Right cardiac atrium (tissue), 5 donors: ENCODE measurements at regions of chr14 and their contacts with region 1.

Region 1: DNA sequence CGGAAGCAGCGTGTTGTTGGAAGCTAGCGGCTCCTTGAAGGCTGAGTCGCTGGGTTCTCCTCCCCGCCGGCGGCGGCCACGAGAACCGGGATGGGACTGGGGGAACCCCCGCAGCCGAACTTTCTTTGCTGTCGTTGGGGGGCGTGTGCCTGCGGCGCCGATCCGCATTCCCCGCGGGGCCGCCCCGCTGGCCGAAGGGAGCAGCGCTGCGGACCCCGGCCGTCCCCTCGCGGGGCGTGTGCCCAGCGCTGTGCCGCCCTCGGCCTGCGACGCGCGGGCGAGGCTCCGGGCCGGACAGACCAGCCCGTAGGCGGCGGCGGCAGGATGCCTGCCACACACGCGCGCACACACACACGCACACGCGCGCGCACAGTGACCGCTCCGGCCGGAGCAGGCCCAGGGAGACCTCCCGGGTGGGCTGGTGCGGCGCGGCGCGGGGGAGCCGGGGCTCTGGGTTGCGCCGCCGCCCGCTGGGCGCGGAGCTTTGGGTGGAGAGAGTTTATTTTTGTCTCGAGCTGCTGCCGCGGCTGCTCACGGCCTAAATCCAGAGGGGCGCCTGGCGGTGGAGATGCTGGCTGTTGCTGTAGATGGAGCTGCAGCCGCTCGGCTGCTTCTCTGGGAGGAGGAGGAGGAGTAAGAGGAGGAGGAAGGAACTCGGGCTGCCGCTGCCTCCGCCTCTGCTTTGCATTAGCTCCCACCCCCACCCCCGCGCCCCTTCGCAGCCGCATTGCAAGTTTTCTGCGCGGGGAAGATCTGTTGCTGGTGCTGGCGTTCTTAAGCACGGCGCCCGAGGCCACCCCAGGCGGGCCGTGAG is at the start of gene SAMD4A:
- DNase-seq: peak; percentile 84 to 94 (median 93)
- ATAC-seq: peak; percentile 60 to 61
- H3K4me3 ChIP-seq: peak within 1 kb of the TSS; percentile 91
- H3K27ac ChIP-seq: peak within 1 kb of the TSS; percentile 91
- H3K4me1 ChIP-seq: peaks cover 8% of the 10 kb centered on the region
- H3K27me3 ChIP-seq: no peaks in the 10 kb centered on the region
- total RNA-seq, gene SAMD4A: 124 to 166 (median 144) TPM

Region 2: DNA sequence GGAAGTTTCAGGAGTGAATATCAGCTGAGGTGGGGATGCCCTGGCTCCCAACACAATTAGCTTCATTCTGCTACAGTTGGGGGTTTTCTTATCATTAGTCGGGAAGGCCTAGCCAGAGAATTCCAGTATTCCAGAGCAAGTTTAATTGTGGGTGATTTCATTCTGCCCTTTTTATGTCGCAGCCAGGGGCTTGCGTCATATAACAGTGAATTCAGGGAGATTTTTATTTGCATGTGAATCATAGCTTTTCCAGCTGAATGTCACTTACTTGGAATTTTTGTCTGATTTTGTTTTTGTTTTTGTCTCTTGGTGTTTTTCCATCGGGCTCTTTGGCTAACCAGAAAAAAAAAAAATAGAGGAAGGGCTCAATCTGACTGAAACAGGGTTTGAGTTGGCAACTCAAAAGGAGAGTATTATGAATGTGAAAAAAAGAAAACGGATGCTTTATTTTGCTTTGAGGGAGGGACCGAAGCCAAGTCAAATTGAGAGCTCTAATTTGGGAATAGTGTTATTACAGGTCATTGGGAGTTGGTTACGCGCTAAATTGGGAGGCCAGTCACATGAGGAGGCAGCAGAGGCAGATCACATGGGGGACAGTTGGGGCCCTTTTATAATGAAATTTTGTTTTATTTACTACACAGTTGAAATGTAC is 119.7 kb after region 1 on chr14:
- intact Hi-C with region 1: loop called in 3 of 4 experiments (anchors 1 to 5 kb)
- DNase-seq: peak in 2 of 3 donors; percentile 60 to 83
- ATAC-seq: peak; percentile 64 to 67
- H3K4me3 ChIP-seq: peak overlapping the region; percentile 4
- H3K27ac ChIP-seq: peak overlapping the region; percentile 99
- H3K4me1 ChIP-seq: peaks cover 24% of the 10 kb centered on the region
- H3K27me3 ChIP-seq: no peaks in the 10 kb centered on the region

Region 3: GRCh38 chr14:54691525-54692283 is 125.1 kb after region 1 on chr14:
- intact Hi-C with region 1: loop called (anchors 1 to 5 kb)
- DNase-seq: peak; percentile 79 to 90 (median 83)
- ATAC-seq: peak; percentile 81 to 84
- H3K4me3 ChIP-seq: no peak overlapping the region
- H3K27ac ChIP-seq: peak overlapping the region; percentile 85
- H3K4me1 ChIP-seq: peaks cover 8% of the 10 kb centered on the region
- H3K27me3 ChIP-seq: no peaks in the 10 kb centered on the region

Region 4: GRCh38 chr14:54762296-54762695 is 195.7 kb after region 1 on chr14:
- intact Hi-C with region 1: no loop called
- DNase-seq: peak in 1 of 3 donors; percentile 52
- ATAC-seq: peak in 1 of 2 donors; percentile 66
- H3K4me3 ChIP-seq: no peak overlapping the region
- H3K27ac ChIP-seq: no peak overlapping the region
- H3K4me1 ChIP-seq: peaks cover 2% of the 10 kb centered on the region
- H3K27me3 ChIP-seq: no peaks in the 10 kb centered on the region

Region 5: GRCh38 chr14:54773171-54773975 is 206.8 kb after region 1 on chr14:
- intact Hi-C with region 1: loop called (anchors 1 to 5 kb)
- DNase-seq: peak; percentile 87 to 90 (median 89)
- ATAC-seq: peak; percentile 88 to 95
- H3K4me3 ChIP-seq: no peak overlapping the region
- H3K27ac ChIP-seq: peak overlapping the region; percentile 93
- H3K4me1 ChIP-seq: peaks cover 8% of the 10 kb centered on the region
- H3K27me3 ChIP-seq: no peaks in the 10 kb centered on the region

Region 6: GRCh38 chr14:54805521-54806322 is 239.1 kb after region 1 on chr14:
- intact Hi-C with region 1: loop called in 1 of 4 experiments (anchors 10 kb)
- DNase-seq: peak; percentile 88 to 94 (median 94)
- ATAC-seq: peak; percentile 91
- H3K4me3 ChIP-seq: no peak overlapping the region
- H3K27ac ChIP-seq: no peak overlapping the region
- H3K4me1 ChIP-seq: peaks cover 2% of the 10 kb centered on the region
- H3K27me3 ChIP-seq: no peaks in the 10 kb centered on the region

Region 7: DNA sequence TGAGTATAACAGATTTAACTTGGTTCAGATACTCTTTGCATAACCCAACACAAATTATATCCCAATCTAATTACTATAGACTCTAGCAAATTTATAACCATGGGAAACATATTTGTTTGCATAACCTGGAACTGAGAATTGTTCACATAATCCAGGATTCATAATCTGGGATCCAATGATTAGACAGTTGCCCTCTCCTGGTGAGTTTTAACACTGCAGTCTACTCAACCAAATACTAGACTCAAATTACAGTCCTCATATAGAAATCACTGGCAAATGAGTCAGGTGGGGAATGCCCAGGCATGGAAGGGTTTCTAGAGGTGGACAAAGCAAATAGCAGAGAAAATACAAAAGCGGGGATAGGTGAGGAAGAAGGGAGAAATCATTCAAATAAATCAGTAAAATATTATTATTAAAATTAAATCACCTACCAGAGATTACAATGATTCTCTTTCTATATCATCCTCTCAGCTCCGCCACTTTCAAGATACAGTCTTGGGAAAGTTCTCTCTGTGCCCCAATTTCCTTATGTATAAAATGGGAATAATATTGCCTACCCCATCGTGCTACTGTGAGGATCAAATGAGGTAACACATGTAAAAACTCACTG is 326.6 kb after region 1 on chr14:
- intact Hi-C with region 1: loop called in 1 of 4 experiments (anchors 10 kb)
- DNase-seq: no peak
- ATAC-seq: peak in 1 of 2 donors; percentile 65
- H3K4me3 ChIP-seq: no peak overlapping the region
- H3K27ac ChIP-seq: no peak overlapping the region
- H3K4me1 ChIP-seq: no peaks in the 10 kb centered on the region
- H3K27me3 ChIP-seq: no peaks in the 10 kb centered on the region